Endothelial cell of umbilical vein (primary cell): ENCODE measurements at regions of chr1 and their contacts with region 1.

Region 1: DNA sequence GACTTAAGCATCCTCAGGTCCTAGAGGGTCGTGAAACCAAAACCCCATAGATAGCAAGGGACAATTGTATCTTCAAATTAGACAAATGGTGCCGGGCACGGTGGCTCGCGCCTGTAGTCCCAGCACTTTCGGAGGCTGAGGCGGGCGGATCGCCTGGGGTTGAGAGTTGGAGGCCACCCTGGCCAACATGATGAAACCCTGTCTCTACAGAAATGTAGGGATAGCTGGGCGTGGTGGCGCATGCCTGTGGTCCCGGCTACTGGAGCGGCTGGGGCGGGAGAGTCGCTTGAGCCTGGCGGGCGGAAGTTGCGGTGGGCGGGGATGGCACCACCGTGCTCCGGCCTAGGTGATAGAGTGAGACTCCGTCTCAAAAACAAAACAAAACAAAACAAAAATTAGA is 780.6 kb downstream of the BRINP3 start:
- DNase-seq: no peak
- H3K4me3 ChIP-seq: no peak overlapping the region
- H3K27ac ChIP-seq: no peak overlapping the region
- H3K4me1 ChIP-seq: no peaks in the 10 kb centered on the region
- H3K27me3 ChIP-seq: no peaks in the 10 kb centered on the region
- CTCF ChIP-seq: no peak
- POLR2A ChIP-seq: no peak

Region 2: GRCh38 chr1:189662190-189662589 is 34.9 kb before region 1 on chr1:
- CTCF ChIA-PET with region 1: no interaction called
- POLR2A ChIA-PET with region 1: interaction called, 11 read pairs
- dilution Hi-C with region 1: no loop called
- intact Hi-C with region 1: no loop called
- DNase-seq: no peak
- H3K4me3 ChIP-seq: no peak overlapping the region
- H3K27ac ChIP-seq: no peak overlapping the region
- H3K4me1 ChIP-seq: no peaks in the 10 kb centered on the region
- H3K27me3 ChIP-seq: no peaks in the 10 kb centered on the region
- CTCF ChIP-seq: no peak
- POLR2A ChIP-seq: no peak